ENCODE measurements at regions of chr2 and their contacts with region 1.

Region 1: DNA sequence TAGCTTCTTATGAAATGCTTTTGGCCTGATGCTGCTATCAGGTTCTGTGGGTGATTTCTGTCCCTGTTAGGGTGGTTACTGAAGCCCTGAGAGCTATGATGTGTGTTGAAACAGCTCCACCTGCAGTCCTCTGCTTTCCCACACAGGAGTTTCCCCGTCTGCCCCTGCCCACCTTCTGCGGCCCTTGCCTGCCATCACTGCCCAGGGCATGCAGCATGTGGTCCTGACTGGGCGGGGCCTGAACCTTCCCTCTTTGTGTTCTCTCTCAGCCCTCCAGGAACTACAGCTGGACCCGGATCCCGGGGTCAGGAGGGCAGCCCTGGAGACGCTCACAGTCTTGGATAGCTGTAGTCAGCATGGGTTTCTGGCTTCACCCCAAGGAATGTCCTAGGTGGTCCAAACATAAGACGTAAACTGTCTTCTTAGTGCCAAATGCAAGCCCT is 21.4 kb downstream of the HJURP start:
- DNase-seq: peak; percentile 80
- ATAC-seq: peak; percentile 95
- H3K4me3 Mint-ChIP-seq: no peak overlapping the region
- H3K27ac Mint-ChIP-seq: no peak overlapping the region
- H3K4me1 Mint-ChIP-seq: peaks cover 7% of the 10 kb centered on the region
- H3K27me3 Mint-ChIP-seq: no peaks in the 10 kb centered on the region
- CTCF ChIP-seq: no peak

Region 2: DNA sequence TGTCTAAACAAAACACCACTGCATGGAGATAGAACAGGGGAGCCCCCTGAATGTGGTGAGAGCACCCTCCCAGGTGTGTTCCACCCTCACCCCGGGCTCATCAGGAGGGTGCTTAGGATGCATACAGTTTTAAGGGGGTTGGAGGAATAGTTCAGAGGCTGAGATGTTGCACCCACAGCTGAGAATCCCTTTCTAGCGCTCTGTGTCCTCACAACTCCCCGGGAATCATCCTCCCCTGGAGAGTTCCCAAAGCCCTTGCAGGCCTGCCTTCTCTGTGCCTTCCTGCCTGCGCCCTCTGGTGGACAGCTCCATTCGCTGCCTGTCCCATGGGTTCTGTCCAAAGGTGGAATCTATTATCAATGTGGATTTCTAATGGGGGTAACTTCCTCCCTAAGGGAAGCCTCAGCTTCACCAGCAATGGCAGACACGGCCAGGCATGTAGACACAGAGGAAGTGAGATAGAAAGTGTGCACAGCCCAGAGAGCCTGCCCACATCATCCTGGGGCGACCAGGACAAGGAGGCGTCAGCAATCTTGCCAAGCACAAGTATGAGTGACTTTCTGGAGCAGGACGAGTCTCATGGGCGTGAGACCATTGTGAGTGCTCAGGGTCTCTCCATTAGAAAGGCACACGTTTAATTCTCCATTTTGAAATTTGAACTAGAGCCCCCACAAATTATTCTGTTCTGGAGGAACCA is 121.4 kb before region 1 on chr2:
- CTCF ChIA-PET with region 1: interaction called, 16 read pairs
- POLR2A ChIA-PET with region 1: no interaction called
- DNase-seq: peak; percentile 89
- ATAC-seq: peak; percentile 97
- H3K4me3 Mint-ChIP-seq: no peak overlapping the region
- H3K27ac Mint-ChIP-seq: no peak overlapping the region
- H3K4me1 Mint-ChIP-seq: peaks cover 4% of the 10 kb centered on the region; the same call in 1 of the 2 replicates
- H3K27me3 Mint-ChIP-seq: no peaks in the 10 kb centered on the region; the same call in 1 of the 2 replicates
- CTCF ChIP-seq: peak; percentile 80

Region 3: DNA sequence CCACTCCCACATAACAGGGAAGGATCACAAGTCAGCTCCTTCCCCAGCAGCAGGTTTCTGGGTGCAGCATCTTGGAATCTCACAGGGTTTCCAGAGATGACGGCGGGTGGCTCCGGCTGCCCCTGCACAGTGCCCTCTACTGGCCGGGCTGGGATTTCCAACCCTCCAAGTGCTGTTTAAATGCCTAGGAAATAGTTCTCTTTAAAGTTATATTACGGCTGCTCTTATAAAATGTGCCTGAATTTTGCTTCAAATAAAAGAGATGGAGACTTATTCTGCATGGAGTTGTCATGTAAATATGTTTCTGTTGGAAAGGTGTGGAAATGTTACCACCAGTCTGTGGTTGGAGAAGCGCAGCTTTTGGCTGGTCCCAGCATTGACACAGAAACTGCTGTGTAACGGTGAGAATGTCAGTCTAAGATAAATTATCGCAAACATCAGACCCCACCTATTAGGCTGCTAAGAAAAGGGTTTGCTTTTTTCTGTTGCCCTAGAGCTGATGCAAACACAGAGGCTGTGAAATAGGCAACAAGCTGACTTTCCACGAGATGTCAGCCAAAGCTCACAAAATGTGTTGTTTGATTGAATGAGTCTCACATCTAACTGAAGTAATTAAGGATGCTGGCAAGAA is 24.7 kb after region 1 on chr2:
- CTCF ChIA-PET with region 1: interaction called, 13 read pairs
- POLR2A ChIA-PET with region 1: no interaction called
- DNase-seq: peak; percentile 74
- ATAC-seq: peak; percentile 14; the same call in 1 of the 2 replicates
- H3K4me3 Mint-ChIP-seq: no peak overlapping the region
- H3K27ac Mint-ChIP-seq: no peak overlapping the region
- H3K4me1 Mint-ChIP-seq: peaks cover 36% of the 10 kb centered on the region
- H3K27me3 Mint-ChIP-seq: no peaks in the 10 kb centered on the region
- CTCF ChIP-seq: peak; percentile 77

Measured in WTC11 (cell line).